Left ventricle myocardium inferior (tissue), 1 donor: ENCODE measurements at regions of chr5 and their contacts with region 1.

Region 1: GRCh38 chr5:178732281-178732680 is 1.8 kb upstream of the ZNF354A start:
- DNase-seq: no peak
- H3K4me3 ChIP-seq: no peak overlapping the region
- H3K27ac ChIP-seq: no peak overlapping the region
- H3K4me1 ChIP-seq: peaks cover 13% of the 10 kb centered on the region
- H3K27me3 ChIP-seq: no peaks in the 10 kb centered on the region
- CTCF ChIP-seq: no peak

Region 2: DNA sequence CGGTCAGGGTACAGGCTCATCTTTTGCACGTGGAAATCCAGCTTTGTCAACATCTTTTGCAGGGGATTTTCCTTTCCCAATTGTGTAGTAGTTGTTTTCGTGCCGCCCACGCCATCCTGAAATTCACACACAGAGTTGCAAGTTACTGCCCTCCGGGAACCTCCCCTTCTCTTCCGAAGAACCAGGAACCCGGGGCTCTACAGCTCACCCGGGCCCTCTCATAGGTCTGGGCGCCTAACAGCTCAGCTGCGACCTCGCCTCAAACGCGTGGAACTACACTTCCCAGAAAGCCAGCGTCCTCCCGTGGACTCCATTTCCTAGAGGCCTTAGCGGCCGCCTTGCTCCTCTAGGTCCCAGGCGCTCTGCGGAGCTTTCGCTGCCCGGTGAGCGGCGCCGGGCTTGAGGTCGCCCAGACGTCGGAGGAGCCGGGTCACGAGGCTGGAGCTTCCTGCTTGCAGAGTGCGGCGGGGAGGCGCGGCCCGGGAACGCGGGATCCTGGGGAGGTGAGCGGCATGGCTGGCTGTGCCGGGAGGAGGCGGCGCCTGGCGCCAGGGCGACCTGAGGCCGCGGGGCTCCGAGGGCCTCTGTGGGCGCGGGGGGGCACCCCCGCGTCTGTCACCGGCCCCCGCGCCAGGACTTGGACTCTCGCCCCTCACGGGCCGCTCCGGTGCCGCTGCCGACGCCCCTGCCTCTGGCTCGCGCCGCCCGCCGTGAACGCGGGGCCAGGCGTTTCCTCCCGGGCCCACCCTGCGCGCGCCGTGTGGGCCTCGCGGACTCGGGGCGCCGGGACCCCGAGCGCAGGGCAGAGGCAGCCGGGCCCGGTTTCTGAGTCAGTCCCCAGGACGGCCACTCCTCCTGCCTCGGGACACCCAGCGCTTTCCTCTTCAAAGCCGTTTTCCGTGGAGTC is 127.6 kb after region 1 on chr5 and contains the start of gene ZNF354B:
- intact Hi-C with region 1: loop called (anchors 10 kb)
- DNase-seq: peak; percentile 89
- H3K4me3 ChIP-seq: peak within 1 kb of the TSS; percentile 97
- H3K27ac ChIP-seq: peak within 1 kb of the TSS; percentile 85
- H3K4me1 ChIP-seq: peaks cover 38% of the 10 kb centered on the region
- H3K27me3 ChIP-seq: no peaks in the 10 kb centered on the region
- CTCF ChIP-seq: no peak
- total RNA-seq, gene ZNF354B: 7.2 TPM

Region 3: GRCh38 chr5:179060116-179061008 is 328.1 kb after region 1 on chr5 and contains the start of gene ZNF354C:
- intact Hi-C with region 1: loop called (anchors 5 kb)
- DNase-seq: peak; percentile 92
- H3K4me3 ChIP-seq: peak within 1 kb of the TSS; percentile 84
- H3K27ac ChIP-seq: peak within 1 kb of the TSS; percentile 88
- H3K4me1 ChIP-seq: peaks cover 27% of the 10 kb centered on the region
- H3K27me3 ChIP-seq: no peaks in the 10 kb centered on the region
- CTCF ChIP-seq: no peak
- total RNA-seq, gene ZNF354C: 5.2 TPM